ENCODE measurements at regions of chr6 and their contacts with region 1.

Region 1: GRCh38 chr6:142112451-142113061 is 20.2 kb upstream of the GJE1 start:
- DNase-seq: no peak

Region 2: DNA sequence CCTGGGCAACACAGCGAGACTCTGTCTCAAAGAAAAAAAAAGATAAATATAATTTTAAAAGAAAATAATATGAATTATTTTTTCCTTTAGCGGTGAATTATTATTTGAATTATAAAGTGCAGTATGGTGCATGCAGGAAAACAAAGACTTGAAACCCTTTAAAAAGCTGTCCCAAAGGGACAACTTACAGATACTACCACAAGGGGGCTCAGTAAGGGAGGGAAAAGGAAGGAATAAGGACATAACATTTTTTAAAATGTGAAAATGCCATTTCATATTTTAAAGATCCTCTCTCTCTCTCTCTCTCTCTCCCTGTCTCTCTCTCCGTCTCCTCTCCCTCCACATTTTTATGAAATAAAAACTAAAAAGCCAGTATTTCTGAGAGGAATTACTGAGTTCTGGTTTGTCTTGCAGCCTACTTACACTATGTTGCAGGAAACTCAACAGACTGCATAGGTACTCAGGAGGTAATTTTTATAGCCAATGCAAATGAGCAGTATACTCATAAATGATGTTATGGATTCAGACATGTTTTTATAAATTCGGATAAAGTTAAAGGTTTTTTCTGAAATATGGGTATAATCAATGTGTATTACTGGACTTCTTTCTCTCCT is 434.9 kb before region 1 on chr6:
- intact Hi-C with region 1: loop called (anchors 5 kb)
- DNase-seq: no peak